ENCODE measurements at regions of chr17 and their contacts with region 1.

Region 1: DNA sequence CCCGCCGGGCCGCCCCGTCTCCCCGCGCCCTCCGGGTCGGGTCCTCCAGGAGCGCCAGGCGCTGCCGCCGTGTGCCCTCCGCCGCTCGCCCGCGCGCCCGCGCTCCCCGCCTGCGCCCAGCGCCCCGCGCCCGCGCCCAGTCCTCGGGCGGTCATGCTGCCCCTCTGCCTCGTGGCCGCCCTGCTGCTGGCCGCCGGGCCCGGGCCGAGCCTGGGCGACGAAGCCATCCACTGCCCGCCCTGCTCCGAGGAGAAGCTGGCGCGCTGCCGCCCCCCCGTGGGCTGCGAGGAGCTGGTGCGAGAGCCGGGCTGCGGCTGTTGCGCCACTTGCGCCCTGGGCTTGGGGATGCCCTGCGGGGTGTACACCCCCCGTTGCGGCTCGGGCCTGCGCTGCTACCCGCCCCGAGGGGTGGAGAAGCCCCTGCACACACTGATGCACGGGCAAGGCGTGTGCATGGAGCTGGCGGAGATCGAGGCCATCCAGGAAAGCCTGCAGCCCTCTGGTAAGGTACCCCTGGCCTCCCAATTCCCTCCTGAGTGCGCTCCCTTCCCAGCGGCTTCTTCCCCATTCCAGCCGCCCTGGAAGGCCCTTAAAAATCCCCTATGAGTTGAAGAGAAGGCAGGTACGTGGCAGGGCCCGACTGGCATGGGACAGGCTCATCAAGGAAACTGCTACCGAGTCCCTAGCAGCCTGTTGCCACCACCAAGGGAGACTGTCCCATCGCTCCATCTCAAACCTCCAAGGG is 505 bp downstream of the IGFBP4 start:
- DNase-seq: peak in 1 of 2 donors; percentile 81
- H3K4me3 ChIP-seq: peak overlapping the region; percentile 75 to 98 (median 77)
- H3K27ac ChIP-seq: peak overlapping the region; percentile 94 to 100
- H3K4me1 ChIP-seq: peaks cover 14 to 16% of the 10 kb centered on the region in 2 donors
- H3K27me3 ChIP-seq: no peaks in the 10 kb centered on the region
- CTCF ChIP-seq: peak in 2 of 3 donors; percentile 18 to 29
- POLR2A ChIP-seq: no peak

Region 2: GRCh38 chr17:40531051-40531991 is 87.6 kb after region 1 on chr17:
- intact Hi-C with region 1: no loop called
- DNase-seq: peak in 1 of 2 donors; percentile 49
- H3K4me3 ChIP-seq: no peak overlapping the region
- H3K27ac ChIP-seq: peak overlapping the region; percentile 96 to 100
- H3K4me1 ChIP-seq: peaks cover 7 to 26% of the 10 kb centered on the region in 2 donors
- H3K27me3 ChIP-seq: no peaks in the 10 kb centered on the region
- CTCF ChIP-seq: no peak
- POLR2A ChIP-seq: no peak

Region 3: DNA sequence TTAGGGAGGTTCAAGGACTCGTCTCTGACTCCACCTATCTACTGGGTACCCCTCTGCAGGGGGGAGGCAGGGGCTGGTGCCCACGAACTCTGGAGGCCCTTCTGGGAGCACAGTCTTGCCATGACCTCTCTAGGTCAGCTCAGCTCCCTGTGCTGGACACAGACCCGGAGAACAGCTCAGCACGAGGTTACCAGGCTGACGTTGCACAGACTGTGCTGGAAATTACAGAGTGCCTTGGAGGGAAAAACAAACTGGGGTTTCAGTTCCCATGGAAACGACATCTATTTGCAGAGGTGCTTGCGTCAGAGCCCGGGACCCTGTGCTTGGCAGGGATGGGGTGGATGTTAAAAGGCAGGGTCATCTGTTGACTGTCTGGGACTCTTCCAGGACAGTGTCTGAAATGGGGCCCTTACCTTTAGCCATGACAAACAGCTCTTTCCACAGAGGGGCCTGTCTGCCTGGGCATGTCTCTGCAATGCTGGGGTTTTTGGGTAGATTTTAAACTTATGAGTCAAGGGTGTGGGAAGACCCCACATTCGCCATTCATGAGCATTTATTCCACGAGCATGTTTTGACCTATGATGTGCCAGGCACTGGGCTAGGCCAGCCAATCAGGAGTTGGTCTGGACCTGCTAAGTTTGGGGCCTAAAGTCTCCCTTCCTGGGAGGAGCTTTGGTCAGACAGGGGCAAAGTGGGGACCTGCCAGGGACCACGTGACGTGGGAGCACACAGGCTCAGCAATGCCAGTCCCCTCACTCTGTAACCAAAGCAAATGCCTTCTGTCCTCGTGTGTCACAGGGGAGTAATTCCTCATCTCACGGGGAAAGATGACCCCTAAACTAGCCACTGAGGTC is 99.0 kb after region 1 on chr17:
- intact Hi-C with region 1: loop called (anchors 5 kb)
- DNase-seq: peak; percentile 60 to 88
- H3K4me3 ChIP-seq: peak overlapping the region in 1 of 3 donors; percentile 54
- H3K27ac ChIP-seq: peak overlapping the region; percentile 96 to 100
- H3K4me1 ChIP-seq: peaks cover 35 to 60% of the 10 kb centered on the region in 2 donors
- H3K27me3 ChIP-seq: no peaks in the 10 kb centered on the region
- CTCF ChIP-seq: no peak
- POLR2A ChIP-seq: peak; percentile 23

Measured in breast epithelium (tissue), 4 donors.